Mammary epithelial cell (primary cell): ENCODE measurements at regions of chr5 and their contacts with region 1.

Region 1: DNA sequence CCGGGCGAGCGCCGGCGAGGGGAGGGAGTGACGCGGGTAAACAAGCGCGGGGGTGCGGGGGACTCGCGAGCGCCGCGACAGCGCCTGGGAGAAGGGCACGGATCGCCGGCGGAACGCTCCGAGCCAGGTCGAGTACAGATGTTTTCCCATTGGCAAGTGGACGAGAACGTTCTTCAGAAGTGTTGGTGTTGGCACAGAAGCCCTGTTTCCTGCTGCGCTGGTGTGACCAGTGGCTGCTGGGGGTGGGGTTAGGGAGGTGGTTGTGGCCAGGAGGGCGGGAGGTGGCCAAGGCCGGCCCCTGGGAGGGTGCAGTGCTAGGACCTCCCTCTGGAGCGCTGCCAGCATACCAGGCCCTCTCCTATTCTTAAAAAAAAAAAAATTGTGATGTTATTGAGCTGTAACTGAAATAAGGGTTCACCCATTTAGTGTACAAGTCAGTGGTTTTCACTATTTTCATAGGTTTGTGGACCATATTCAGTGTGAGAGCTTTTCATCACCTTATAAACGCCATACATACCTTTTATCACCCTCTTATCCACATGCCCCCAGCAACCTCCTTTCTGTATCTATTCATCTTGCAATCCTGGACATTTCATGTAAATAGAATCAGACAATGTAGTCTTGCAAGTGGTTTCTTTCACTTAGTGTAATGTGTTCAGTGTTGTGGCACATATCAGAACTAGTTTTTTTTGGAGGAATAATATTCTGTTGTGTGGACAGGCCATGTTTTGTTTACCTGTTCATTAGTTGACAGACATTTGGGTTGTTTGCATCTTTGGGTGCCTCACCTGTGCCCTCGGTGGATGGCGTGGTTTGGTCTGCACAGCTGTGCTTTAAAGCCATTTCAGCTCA is 1.1 kb downstream of the SQSTM1 start:
- DNase-seq: peak; percentile 89
- H3K4me3 ChIP-seq: peak overlapping the region; percentile 64 to 91 (median 77)
- H3K27ac ChIP-seq: peak overlapping the region; percentile 63
- H3K4me1 ChIP-seq: peaks cover 36% of the 10 kb centered on the region
- H3K27me3 ChIP-seq: no peaks in the 10 kb centered on the region
- CTCF ChIP-seq: no peak

Region 2: DNA sequence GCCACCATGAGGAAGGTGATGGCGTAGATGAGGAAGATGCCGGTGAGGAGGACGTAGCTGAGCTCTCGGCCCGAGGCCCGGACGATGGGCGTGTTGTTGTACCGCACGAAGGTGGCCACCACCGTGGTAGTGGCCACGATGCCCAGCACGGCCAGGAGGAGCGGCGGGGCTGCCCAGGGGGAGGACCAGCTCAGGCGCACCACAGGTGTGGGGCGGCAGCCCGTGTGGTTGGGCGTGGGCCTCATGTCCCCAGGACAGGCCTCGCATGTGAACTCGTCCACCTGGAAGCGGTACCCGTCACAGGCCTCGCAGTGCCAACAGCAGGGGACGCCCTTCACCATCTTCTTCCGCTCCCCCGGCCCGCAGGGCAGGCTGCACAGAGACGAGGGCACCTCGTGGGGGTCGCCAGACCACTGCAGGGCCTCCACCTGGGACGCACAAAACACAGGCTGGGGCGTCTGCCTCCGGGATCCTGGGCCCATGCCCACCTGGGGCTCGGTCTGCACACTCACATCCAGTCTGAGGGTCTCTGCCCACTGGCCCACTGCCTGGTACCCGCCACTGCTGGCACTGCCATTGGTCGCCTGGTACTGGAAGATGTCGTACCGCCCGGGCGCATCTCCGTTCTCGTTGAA is 835.4 kb before region 1 on chr5:
- CTCF ChIA-PET with region 1: no interaction called
- dilution Hi-C with region 1: no loop called
- in situ Hi-C with region 1: no loop called
- intact Hi-C with region 1: no loop called
- DNase-seq: no peak
- H3K4me3 ChIP-seq: no peak overlapping the region
- H3K27ac ChIP-seq: no peak overlapping the region
- H3K4me1 ChIP-seq: no peaks in the 10 kb centered on the region
- H3K27me3 ChIP-seq: no peaks in the 10 kb centered on the region
- CTCF ChIP-seq: no peak

Region 3: DNA sequence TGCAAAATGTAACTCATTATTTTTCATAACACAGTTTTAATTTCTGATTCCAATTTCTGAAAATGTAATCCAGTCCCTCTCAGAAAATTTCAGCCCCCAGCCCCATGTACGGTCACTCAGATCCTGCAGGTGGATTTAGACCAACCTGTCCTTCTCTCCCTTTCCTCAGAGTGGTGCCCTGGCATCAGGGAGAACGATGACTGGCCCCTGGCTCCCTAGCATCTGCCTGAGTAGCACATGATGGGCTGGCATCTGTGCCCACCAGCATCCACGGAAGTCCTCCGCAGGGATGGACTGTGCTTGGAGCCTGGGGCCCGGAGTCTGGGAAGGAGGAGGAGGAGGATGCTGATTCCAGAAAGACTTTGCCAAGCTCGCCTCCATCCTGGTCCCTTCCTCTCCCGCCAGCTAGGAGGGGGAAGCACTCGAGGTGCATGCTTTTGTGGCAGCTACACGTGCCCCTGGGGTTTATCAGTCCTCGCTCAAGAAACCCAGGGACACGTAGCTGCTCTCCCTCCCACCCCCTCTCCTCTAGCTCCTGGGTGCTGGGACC is 325.8 kb before region 1 on chr5:
- CTCF ChIA-PET with region 1: no interaction called
- dilution Hi-C with region 1: no loop called
- in situ Hi-C with region 1: no loop called
- intact Hi-C with region 1: no loop called
- DNase-seq: no peak
- H3K4me3 ChIP-seq: no peak overlapping the region
- H3K27ac ChIP-seq: no peak overlapping the region
- H3K4me1 ChIP-seq: no peaks in the 10 kb centered on the region
- H3K27me3 ChIP-seq: no peaks in the 10 kb centered on the region
- CTCF ChIP-seq: peak in 1 of 2 donors; percentile 26

Region 4: DNA sequence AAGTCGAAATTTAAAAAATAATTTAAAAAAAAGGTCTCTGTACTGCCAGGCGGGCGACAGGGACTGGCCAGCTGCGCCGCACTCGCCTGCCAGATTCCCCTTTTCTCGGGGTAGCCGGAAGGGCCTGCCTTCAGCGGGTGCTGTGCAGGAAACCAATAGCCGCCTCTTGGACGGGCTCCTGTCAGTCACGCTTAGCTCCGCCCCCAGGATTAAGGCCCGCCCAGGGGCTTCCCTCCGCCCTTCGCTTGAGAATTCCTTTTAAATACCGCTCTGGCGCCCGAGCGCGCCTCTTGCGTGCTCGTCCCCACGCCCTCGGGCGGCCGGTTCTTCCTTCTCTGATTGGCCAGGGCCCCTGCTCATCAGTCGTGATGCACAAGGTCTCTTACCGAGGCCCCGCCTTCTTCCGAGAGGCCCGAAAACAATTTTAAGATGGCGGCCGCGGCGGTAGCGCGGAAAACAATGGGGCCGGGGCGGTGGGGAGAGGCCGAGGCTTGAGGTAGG is 89.3 kb before region 1 on chr5 and contains the start of gene MAML1:
- CTCF ChIA-PET with region 1: no interaction called
- dilution Hi-C with region 1: no loop called
- in situ Hi-C with region 1: no loop called
- intact Hi-C with region 1: loop called (anchors 1 kb)
- DNase-seq: peak; percentile 100
- H3K4me3 ChIP-seq: peak within 1 kb of the TSS; percentile 58 to 82 (median 60)
- H3K27ac ChIP-seq: peak within 1 kb of the TSS; percentile 67
- H3K4me1 ChIP-seq: peaks cover 8% of the 10 kb centered on the region
- H3K27me3 ChIP-seq: no peaks in the 10 kb centered on the region
- CTCF ChIP-seq: no peak
- total RNA-seq, gene MAML1: 10.5 to 17.7 TPM

Region 5: GRCh38 chr5:179806250-179807222 is 15.3 kb before region 1 on chr5 and contains the start of gene MGAT4B:
- CTCF ChIA-PET with region 1: no interaction called
- dilution Hi-C with region 1: no loop called
- in situ Hi-C with region 1: no loop called
- intact Hi-C with region 1: loop called (anchors 1 kb)
- DNase-seq: peak; percentile 81
- H3K4me3 ChIP-seq: peak within 1 kb of the TSS; percentile 83 to 89 (median 86)
- H3K27ac ChIP-seq: peak within 1 kb of the TSS; percentile 27
- H3K4me1 ChIP-seq: peaks cover 36% of the 10 kb centered on the region
- H3K27me3 ChIP-seq: no peaks in the 10 kb centered on the region
- CTCF ChIP-seq: no peak
- total RNA-seq, gene MGAT4B: 88.0 to 143 TPM

Region 6: GRCh38 chr5:179858586-179859427 is 37.0 kb after region 1 on chr5 and contains the start of gene MRNIP:
- CTCF ChIA-PET with region 1: no interaction called
- dilution Hi-C with region 1: no loop called
- in situ Hi-C with region 1: no loop called
- intact Hi-C with region 1: loop called (anchors 1 kb)
- DNase-seq: peak; percentile 92
- H3K4me3 ChIP-seq: peak within 1 kb of the TSS; percentile 91 to 97 (median 92)
- H3K27ac ChIP-seq: peak within 1 kb of the TSS; percentile 63
- H3K4me1 ChIP-seq: peaks cover 5% of the 10 kb centered on the region
- H3K27me3 ChIP-seq: no peaks in the 10 kb centered on the region
- CTCF ChIP-seq: peak in 1 of 2 donors; percentile 25
- total RNA-seq, gene MRNIP: 9.5 to 20.4 TPM